ENCODE measurements at regions of chr17 and their contacts with region 1.

Region 1: DNA sequence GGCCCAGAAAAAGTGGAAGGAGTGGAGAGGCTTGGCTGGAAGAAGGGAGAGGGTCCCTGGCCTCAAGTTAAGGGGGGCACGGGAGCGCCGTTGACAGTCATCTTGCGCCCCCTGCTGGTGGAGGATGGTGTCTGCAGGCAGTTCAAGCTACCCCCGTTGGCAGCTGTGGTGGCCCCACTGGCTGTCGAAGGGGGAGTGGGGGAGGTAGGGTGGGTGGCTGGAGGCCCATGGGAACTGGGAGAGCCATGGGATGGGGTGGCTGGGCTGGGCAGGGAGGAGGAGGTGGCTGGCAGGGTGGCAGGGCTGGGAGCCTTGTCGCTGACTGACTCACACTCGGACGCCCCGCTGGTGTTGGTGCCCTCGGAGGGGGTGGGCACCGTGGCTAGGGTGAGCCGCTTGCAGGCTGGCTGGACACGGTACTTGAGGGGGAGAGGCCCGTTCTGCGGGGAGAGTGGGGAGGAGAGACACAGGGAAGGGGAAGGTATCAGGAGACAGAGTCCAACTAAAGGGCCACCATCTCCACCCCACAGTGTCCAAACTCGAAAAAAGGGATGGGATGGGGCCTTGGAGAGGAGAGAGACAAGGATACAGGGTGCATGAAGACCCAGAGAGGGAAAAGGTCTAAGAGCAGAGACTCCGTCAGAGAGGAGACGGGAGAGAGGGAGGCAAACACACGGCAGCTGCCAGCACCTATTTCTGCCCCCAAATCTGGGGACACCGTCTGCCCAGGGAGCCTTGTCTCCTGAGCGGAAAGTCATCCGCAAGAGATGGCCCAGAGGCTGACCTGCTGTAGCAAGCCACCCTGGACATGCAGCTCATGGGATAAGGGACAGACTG is 5.2 kb downstream of the CISD3 start:
- H3K4me3 ChIP-seq: no peak overlapping the region
- H3K27ac ChIP-seq: no peak overlapping the region
- H3K4me1 ChIP-seq: peaks cover 5% of the 10 kb centered on the region
- CTCF ChIP-seq: peak; percentile 92

Region 2: GRCh38 chr17:38579934-38580333 is 155.4 kb before region 1 on chr17:
- CTCF ChIA-PET with region 1: no interaction called
- POLR2A ChIA-PET with region 1: no interaction called
- H3K4me3 ChIP-seq: no peak overlapping the region
- H3K27ac ChIP-seq: no peak overlapping the region
- H3K4me1 ChIP-seq: peaks cover 6% of the 10 kb centered on the region
- CTCF ChIP-seq: peak; percentile 90

Region 3: GRCh38 chr17:38674749-38675615 is 60.4 kb before region 1 on chr17 and contains the start of gene EPOP:
- CTCF ChIA-PET with region 1: interaction called, 60 read pairs
- POLR2A ChIA-PET with region 1: interaction called, 9 read pairs
- H3K4me3 ChIP-seq: peak within 1 kb of the TSS; percentile 45
- H3K27ac ChIP-seq: peak within 1 kb of the TSS; percentile 8; the same call in 1 of the 2 replicates
- H3K4me1 ChIP-seq: peaks cover 18% of the 10 kb centered on the region
- CTCF ChIP-seq: no peak

Region 4: DNA sequence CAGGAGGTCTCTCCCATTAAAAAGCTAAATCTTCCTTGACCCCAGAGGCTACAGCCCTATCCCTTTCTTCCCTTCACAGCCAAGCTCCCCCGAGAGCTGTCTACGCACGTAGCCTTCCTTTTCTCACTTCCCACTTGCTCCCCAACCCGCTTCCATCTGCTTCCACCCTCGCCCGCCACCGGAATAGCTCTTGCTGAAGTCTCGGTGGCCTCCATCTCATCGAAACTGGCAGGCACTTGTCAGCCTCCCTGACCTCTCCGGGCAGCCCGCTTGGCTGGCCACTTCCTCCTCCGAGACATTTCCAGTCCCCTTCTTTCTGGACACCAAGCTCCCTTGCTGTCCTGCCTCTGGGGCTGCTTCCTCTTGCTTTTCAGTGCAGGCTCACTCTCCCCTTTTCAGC is 49.9 kb before region 1 on chr17:
- CTCF ChIA-PET with region 1: interaction called, 22 read pairs
- POLR2A ChIA-PET with region 1: interaction called, 5 read pairs
- H3K4me3 ChIP-seq: no peak overlapping the region
- H3K27ac ChIP-seq: no peak overlapping the region
- H3K4me1 ChIP-seq: no peaks in the 10 kb centered on the region
- CTCF ChIP-seq: no peak

Region 5: GRCh38 chr17:38693700-38694329 is 41.6 kb before region 1 on chr17:
- CTCF ChIA-PET with region 1: interaction called, 11 read pairs
- POLR2A ChIA-PET with region 1: interaction called, 5 read pairs
- H3K4me3 ChIP-seq: no peak overlapping the region
- H3K27ac ChIP-seq: no peak overlapping the region
- H3K4me1 ChIP-seq: no peaks in the 10 kb centered on the region
- CTCF ChIP-seq: no peak; the same call in 1 of the 2 replicates

Region 6: DNA sequence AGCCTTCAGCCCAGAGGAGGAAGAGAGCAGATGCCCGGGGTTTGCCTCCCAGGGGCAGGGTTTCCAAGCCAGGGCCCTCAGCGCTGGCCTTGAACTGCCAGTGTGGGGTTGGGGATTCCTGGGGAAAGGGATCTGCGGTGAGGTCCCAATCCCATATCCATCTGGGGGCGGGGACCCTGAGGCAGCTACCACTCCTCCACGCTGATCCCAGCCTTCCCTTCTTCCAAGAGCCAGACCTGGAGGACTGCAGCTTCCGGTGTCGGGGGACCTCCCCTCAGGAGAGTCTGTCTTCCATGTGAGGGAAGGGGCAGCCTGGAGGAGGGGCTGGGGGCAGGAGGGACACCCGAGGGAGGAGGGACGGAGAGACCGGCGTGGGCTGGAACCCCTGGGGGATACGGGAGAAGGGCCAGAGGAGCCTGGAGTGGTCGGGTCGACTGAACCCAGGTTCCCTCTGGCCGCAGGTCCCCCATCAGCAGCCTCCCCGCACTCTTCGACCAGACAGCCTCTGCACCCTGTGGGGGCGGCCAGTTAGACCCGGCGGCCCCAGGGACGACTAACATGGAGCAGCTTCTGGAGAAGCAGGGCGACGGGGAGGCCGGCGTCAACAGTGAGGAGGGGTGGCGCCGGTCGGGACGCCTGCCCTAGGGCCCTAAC is 16.0 kb before region 1 on chr17:
- CTCF ChIA-PET with region 1: interaction called, 18 read pairs
- POLR2A ChIA-PET with region 1: interaction called, 14 read pairs
- H3K4me3 ChIP-seq: no peak overlapping the region
- H3K27ac ChIP-seq: no peak overlapping the region
- H3K4me1 ChIP-seq: no peaks in the 10 kb centered on the region
- CTCF ChIP-seq: no peak

Region 7: DNA sequence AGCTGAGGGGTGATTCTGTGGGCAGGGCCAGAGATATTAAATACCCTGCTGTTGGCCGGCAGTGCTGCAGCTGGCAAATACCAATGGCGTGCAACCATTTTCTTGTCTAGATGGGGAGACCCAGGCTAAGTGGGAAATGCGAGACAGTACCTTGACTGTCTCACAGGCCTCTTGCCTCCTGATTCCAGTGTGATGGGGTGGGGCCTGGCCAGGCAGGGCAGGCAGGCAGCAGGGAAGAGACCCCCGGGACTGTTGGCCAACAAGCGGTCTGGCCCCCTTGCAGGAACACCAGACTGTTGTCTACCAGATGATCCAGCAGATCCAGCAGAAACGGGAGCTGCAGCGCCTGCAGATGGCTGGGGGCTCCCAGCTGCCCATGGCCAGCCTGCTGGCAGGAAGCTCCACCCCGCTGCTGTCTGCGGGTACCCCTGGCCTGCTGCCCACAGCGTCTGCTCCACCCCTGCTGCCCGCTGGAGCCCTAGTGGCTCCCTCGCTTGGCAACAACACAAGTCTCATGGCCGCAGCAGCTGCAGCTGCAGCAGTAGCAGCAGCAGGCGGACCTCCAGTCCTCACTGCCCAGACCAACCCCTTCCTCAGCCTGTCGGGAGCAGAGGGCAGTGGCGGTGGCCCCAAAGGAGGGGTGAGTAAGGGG is 10.9 kb before region 1 on chr17:
- CTCF ChIA-PET with region 1: interaction called, 18 read pairs
- POLR2A ChIA-PET with region 1: interaction called, 14 read pairs
- H3K4me3 ChIP-seq: no peak overlapping the region
- H3K27ac ChIP-seq: no peak overlapping the region
- H3K4me1 ChIP-seq: no peaks in the 10 kb centered on the region
- CTCF ChIP-seq: no peak

Measured in HEK293 (cell line).